ENCODE measurements at regions of chr1 and their contacts with region 1.

Region 1: GRCh38 chr1:2525920-2526823 is at the start of gene PANK4:
- DNase-seq: peak; percentile 87 to 96 (median 93)
- H3K4me3 ChIP-seq: peak within 1 kb of the TSS; percentile 64 to 100 (median 91)
- H3K27ac ChIP-seq: peak within 1 kb of the TSS in 58 of 59 donors; percentile 10 to 94 (median 86)
- H3K27me3 ChIP-seq: peaks cover 0 to 20% (median 6%) of the 10 kb centered on the region in 45 donors
- CTCF ChIP-seq: peak in 36 of 56 donors; percentile 9 to 57 (median 34)
- total RNA-seq, gene PANK4: 31.4 to 65.2 (median 46.7) TPM

Region 2: DNA sequence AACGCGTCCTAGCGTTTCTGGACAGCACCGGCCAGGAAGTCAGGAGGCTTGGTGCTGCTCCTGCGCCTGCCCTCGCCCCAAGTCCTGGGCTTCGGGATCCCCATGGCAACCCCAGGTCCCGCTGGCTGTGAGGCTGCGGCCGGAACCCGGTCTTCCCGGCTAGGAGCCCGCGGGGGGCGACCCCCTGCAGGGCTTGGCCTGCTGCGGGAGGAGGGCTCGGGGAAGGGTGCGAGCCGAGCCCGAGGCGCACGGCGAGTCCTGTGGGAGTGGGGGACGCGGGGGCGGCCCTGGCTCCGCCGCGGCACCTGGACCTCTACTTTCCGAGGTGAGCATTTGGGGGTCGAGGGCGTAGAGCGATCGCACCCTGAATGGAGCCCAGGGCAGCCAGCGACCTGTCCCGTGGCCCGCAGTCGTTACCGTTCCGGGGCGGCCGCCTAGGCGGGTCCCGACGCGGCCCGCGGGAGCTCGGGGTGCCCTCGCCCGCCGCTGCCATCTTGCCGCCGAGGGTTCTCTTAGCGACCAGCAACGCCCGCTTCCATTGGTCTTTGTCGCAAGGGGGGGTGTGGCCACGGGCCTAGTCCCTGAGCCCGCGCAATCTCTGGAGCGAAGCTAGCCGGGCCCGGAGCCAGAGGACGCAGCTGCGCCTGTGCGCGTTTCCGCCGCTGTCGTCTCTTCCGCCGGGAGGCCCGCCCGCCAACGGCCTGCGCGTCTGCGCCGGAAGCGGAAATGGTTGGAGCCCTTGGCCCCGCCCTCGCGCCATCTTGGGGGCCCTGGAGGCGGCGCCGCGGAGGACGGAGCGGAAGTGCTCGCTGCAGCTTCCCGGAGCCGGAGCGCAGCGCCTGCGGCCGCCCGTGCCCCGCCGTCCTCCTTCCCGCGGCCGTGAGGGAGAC is 134.9 kb before region 1 on chr1 and contains the starts of genes MORN1 and RER1:
- intact Hi-C with region 1: loop called in 1 of 2 experiments (anchors 5 kb)
- DNase-seq: peak; percentile 97 to 99 (median 99)
- H3K4me3 ChIP-seq: peak within 1 kb of the TSS; percentile 62 to 100 (median 91)
- H3K27ac ChIP-seq: peak within 1 kb of the TSS in 58 of 59 donors; percentile 38 to 93 (median 83)
- H3K27me3 ChIP-seq: no peaks in the 10 kb centered on the region
- CTCF ChIP-seq: peak in 42 of 56 donors; percentile 7 to 71 (median 40)
- total RNA-seq, gene MORN1: 14.0 to 39.6 (median 25.8) TPM
- total RNA-seq, gene RER1: 62.7 to 113 (median 81.7) TPM

Region 3: DNA sequence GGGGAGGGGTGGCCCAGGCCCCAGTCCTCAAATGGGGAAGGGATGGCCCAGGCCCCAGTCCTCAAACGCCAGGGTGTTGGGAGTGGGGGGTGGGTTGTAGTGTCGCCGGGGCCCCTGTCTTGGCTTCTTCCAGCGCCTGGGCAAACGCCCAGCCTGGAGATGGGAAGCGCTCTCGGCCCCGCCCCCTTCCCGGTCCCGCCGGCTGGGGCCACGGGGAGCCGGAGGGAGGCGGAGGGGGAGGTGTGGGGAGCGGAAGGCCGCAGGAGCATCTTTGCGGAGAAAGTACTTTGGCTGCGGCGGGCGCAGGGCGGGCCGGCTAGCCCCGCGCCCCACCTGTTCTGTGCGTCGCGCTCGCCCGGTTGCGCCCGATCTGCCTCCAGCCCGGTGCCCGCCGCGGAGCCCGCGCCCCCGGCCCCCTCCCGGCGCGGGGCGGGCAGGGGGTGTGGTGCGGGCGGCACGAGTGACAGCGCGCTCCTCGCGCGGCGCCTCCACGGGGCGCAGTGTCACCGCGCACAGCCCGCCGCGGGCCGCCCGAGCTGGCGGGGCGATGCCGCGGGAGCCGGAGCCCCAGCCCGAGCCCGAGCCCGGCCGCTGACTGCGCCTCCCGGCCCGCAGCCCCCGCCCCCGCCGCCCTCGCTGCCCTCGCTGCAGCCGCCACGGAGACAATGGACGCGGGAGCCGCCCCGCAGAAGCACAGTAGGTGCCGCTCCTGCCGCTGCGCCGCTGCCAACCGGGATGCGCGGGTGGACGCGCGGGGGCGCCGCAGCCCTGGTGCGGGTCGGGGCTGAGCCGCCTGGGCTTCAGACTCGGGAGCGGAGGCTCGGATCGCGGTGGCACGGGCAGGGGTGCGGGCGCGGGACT is 82.7 kb before region 1 on chr1:
- intact Hi-C with region 1: loop called in 1 of 2 experiments (anchors 5 kb)
- DNase-seq: peak; percentile 53 to 88 (median 72)
- H3K4me3 ChIP-seq: peak overlapping the region; percentile 26 to 74 (median 59)
- H3K27ac ChIP-seq: peak overlapping the region; percentile 6 to 99 (median 96)
- H3K27me3 ChIP-seq: peaks cover 0 to 15% (median 0%) of the 10 kb centered on the region in 45 donors
- CTCF ChIP-seq: peak in 51 of 56 donors; percentile 20 to 68 (median 48)

Region 4: DNA sequence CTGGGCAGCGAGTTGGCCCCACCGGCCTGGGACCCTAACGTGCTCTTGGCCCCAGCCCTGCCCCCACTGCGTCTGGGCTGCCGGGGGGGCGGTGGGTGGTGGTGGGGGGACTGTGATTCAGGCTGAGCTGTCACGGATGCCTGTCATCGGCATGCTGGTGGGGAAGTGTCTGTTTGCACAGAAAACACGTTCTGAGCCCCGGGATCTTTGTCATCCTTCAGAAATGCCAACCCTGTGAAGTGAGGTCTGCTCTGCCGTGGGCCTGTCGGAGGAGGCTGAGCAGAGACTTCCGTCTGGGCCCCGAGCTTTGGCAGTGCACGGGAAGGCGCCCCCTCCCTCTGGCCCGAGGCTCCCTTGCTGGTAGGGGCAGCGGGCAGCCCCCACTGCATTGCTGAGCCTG is 74.4 kb before region 1 on chr1:
- intact Hi-C with region 1: loop called (anchors 5 kb)
- DNase-seq: no peak
- H3K4me3 ChIP-seq: no peak overlapping the region
- H3K27ac ChIP-seq: peak overlapping the region in 58 of 59 donors; percentile 32 to 98 (median 89)
- H3K27me3 ChIP-seq: peaks cover 0 to 10% (median 0%) of the 10 kb centered on the region in 45 donors
- CTCF ChIP-seq: no peak

Region 5: DNA sequence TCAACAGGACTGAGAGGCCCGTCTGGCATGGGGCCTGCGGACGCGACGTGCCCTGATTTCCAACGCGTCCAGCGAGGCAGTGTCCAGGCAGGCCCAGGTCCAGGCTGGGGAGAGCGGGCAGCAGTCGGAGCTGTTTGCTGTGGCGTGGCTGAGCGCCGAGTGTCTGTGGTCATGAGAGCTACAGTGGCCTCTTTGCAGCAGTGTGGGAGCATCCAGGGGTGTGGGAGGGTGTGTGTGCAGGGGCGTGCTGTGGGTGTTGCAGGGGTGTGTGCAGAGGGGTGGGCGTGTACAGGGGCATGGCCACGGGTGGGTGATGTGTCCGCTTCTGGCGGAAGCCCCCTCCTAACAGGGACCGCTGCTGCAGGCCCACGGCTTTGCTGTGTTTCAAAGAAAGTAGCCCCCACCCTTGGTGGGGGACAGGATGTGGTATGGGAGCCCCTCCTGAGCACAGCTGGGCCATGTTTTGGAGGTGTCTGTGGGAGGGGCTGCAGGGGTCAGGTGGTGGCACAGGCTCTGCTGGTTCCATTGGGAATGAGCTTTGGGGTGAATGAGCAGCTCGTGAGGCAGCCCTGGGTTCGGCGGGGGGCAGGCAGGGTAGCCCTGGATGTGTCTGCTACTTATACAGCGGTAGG is 32.4 kb before region 1 on chr1:
- intact Hi-C with region 1: loop called in 1 of 2 experiments (anchors 2 kb)
- DNase-seq: peak; percentile 79 to 96 (median 89)
- H3K4me3 ChIP-seq: peak overlapping the region in 2 of 59 donors; percentile 1 to 6
- H3K27ac ChIP-seq: peak overlapping the region in 39 of 59 donors; percentile 2 to 77 (median 55)
- H3K27me3 ChIP-seq: no peaks in the 10 kb centered on the region
- CTCF ChIP-seq: peak in 8 of 56 donors; percentile 9 to 33 (median 16)

Region 6: DNA sequence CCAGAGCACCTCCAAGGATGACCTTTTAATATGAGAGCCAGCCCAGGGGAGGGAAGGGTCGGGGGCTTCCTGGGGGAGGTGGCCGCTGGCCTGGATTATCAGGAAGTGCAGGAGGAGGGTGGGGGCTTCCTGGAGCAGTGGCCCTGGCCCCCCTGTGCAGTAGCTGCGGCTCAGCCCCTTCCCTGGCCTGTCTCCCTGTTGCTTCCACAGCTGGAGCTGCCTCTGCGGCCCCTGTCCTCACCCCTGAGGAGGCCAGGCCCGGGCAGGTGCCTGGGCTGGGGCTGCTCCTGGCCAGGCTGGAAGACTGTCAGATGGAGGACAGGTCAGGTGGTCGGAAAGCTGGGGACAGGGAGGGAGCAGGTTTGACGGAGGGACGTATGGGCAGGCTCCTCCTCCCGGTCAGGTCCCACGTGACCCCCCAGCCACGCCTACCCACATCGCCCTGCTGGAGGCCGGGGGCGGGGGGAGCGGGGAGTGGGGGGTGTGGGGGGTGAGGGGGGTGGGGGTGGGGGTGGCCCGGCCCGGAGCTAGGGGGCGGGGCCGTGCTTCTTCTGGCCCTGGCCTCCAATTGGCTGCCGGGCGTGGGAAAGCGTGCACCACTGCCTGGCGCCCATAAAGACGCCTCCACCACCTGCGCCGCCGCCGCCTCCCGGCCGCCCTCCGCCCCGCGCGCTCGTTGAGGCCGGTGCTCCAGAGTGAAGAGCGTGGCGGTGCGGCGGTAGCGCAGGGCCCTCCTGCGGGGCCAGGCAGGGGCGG is 19.8 kb after region 1 on chr1:
- intact Hi-C with region 1: loop called (anchors 1 to 2 kb)
- DNase-seq: peak in 9 of 10 donors; percentile 39 to 86 (median 76)
- H3K4me3 ChIP-seq: peak overlapping the region; percentile 25 to 69 (median 56)
- H3K27ac ChIP-seq: peak overlapping the region in 56 of 59 donors; percentile 29 to 99 (median 96)
- H3K27me3 ChIP-seq: peaks cover 0 to 7% (median 0%) of the 10 kb centered on the region in 45 donors
- CTCF ChIP-seq: peak in 1 of 56 donors; percentile 3

Region 7: GRCh38 chr1:2586154-2587070 is 60.2 kb after region 1 on chr1 and contains the start of gene PRXL2B:
- intact Hi-C with region 1: loop called (anchors 2 to 10 kb)
- DNase-seq: peak; percentile 97 to 99 (median 99)
- H3K4me3 ChIP-seq: peak within 1 kb of the TSS; percentile 67 to 95 (median 85)
- H3K27ac ChIP-seq: peak within 1 kb of the TSS; percentile 55 to 99 (median 94)
- H3K27me3 ChIP-seq: no peaks in the 10 kb centered on the region
- CTCF ChIP-seq: peak in 8 of 56 donors; percentile 5 to 26 (median 12)
- total RNA-seq, gene PRXL2B: 24.0 to 76.4 (median 50.5) TPM

Measured in dorsolateral prefrontal cortex (tissue), 120 donors.